Naive thymus-derived CD4-positive, alpha-beta T cell (primary cell): ENCODE measurements at regions of chr19 and their contacts with region 1.

Region 1: DNA sequence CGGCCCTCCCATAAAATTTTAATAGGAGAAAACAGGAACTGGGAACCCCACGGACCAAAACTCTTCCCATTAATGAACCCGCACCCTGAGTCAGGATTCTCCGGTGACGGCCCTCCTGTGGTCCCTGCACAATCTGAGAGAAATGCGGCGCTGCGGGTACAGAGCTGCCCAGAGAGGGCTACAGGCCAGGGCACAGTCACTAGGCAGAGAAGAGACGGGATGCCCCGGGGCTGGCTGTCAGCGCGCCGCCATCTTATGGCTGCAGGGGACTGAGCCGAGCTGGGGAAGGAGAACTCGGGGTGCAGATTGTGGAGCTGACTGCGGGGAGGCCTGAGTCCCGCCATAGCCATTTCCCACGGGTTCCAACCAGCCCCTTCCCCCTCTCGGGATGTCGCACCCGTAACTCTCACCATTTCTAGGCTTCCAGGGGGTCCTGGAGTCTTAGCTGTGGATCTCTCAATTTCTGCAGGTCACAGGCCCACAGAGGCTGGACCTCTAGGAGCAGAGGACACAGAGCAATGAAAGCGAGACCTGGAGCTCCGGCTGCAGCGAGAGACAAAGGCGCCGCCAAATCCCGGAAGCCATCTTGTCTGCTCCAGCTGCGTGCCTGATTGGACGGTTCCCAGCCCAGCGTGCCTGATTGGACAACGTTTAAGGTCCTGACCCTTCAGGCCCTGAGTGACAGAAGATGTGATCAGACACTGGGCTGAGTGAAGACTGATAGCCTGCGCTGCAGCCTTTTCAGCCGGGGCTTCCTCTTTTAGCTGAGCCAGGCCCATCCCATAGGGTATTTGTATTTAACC is at the start of gene ZNF675:
- DNase-seq: peak; percentile 68 to 90 (median 87)
- ATAC-seq: peak; percentile 95
- H3K4me3 ChIP-seq: peak within 1 kb of the TSS; percentile 94
- H3K4me3 Mint-ChIP-seq: peak within 1 kb of the TSS; percentile 96 to 99 (median 98)
- H3K27ac ChIP-seq: peak within 1 kb of the TSS; percentile 95
- H3K27ac Mint-ChIP-seq: peak within 1 kb of the TSS; percentile 96 to 99 (median 98)
- H3K4me1 ChIP-seq: peaks cover 9 to 30% of the 10 kb centered on the region in 2 donors
- H3K4me1 Mint-ChIP-seq: peaks cover 14 to 59% (median 50%) of the 10 kb centered on the region in 7 donors
- H3K27me3 ChIP-seq: no peaks in the 10 kb centered on the region
- H3K27me3 Mint-ChIP-seq: no peaks in the 10 kb centered on the region
- total RNA-seq, gene ZNF675: 17.5 to 39.6 (median 24.0) TPM

Region 2: DNA sequence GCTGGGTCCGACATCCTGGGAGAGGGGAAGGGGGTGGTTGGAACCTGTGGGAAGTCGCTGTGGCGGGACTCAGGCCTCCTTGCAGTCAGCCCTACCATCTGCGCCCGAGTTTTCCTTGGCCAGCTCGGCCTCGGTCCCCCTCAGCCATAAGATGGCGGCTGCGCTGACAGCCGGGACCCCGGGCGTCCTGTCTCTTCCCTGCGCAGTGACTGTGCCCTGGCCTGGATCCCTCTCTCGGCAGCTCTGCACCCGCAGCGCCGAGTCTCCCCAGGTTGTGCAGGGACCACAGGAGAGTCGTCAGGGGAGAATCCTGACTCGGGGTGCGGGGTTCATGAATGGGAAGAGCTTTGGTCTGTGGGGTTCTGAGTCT is 1634.2 kb before region 1 on chr19:
- CTCF ChIA-PET with region 1: no interaction called
- POLR2A ChIA-PET with region 1: no interaction called
- intact Hi-C with region 1: loop called in 1 of 2 experiments (anchors 5 kb)
- DNase-seq: no peak
- ATAC-seq: peak; percentile 44
- H3K4me3 ChIP-seq: peak overlapping the region; percentile 76
- H3K4me3 Mint-ChIP-seq: peak overlapping the region; percentile 89 to 96 (median 94)
- H3K27ac ChIP-seq: peak overlapping the region; percentile 72
- H3K27ac Mint-ChIP-seq: peak overlapping the region; percentile 65 to 92 (median 88)
- H3K4me1 ChIP-seq: no peaks in the 10 kb centered on the region
- H3K4me1 Mint-ChIP-seq: peaks cover 0 to 14% (median 0%) of the 10 kb centered on the region in 7 donors
- H3K27me3 ChIP-seq: no peaks in the 10 kb centered on the region
- H3K27me3 Mint-ChIP-seq: no peaks in the 10 kb centered on the region

Region 3: DNA sequence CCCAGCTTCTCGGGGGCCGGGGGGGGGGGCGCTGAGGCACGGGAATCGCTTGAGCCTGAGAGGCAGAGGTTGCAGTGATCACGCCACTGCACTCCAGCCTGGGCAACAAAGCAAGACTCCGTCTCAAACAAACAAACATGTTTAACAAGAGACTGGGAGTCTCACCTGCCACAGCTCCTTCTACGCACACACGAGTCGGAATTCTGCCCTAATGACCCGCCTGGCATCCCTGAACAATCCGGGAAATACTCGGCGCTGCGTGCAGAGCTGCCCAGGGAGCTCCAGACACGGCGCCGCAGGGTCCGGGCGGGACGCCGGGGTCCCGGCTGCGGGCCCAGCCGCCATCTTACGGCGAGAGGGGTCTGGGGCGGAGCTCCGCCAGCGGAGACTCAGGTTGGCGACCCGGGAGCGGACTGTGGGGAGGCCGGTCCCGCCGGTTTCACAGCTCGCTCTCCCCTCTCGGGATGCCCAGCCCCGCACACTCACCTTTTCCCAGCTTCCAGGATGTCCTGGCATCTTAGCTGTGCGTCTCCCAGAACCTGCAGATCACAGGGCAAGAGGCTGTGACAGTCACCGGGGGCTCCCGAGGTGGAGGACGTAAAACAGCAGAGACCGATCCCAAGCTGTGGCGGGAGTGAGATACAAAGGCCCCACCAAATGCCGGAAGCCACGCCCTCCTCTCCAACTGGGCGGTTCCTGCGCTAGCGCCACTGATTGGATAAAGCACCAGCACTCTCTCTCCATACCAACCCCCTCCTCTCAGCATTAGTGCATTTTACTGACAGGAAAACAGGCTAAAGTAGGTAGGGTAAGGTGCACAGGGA is 413.0 kb before region 1 on chr19:
- CTCF ChIA-PET with region 1: no interaction called
- POLR2A ChIA-PET with region 1: interaction called, 3 read pairs
- intact Hi-C with region 1: loop called (anchors 5 kb)
- DNase-seq: peak; percentile 76 to 93 (median 91)
- ATAC-seq: peak; percentile 100
- H3K4me3 ChIP-seq: peak overlapping the region; percentile 94
- H3K4me3 Mint-ChIP-seq: peak overlapping the region; percentile 94 to 99 (median 98)
- H3K27ac ChIP-seq: peak overlapping the region; percentile 95
- H3K27ac Mint-ChIP-seq: peak overlapping the region; percentile 92 to 98 (median 96)
- H3K4me1 ChIP-seq: peaks cover 0 to 7% of the 10 kb centered on the region in 2 donors
- H3K4me1 Mint-ChIP-seq: peaks cover 15 to 47% (median 30%) of the 10 kb centered on the region in 7 donors
- H3K27me3 ChIP-seq: no peaks in the 10 kb centered on the region
- H3K27me3 Mint-ChIP-seq: no peaks in the 10 kb centered on the region

Region 4: GRCh38 chr19:23758187-23759074 is 71.6 kb after region 1 on chr19 and contains the start of gene ZNF681:
- CTCF ChIA-PET with region 1: no interaction called
- POLR2A ChIA-PET with region 1: interaction called, 30 read pairs
- intact Hi-C with region 1: loop called (anchors 1 kb)
- DNase-seq: peak; percentile 56 to 93 (median 89)
- ATAC-seq: peak; percentile 93
- H3K4me3 ChIP-seq: peak within 1 kb of the TSS; percentile 95
- H3K4me3 Mint-ChIP-seq: peak within 1 kb of the TSS; percentile 87 to 96 (median 92)
- H3K27ac ChIP-seq: peak within 1 kb of the TSS; percentile 91
- H3K27ac Mint-ChIP-seq: peak within 1 kb of the TSS; percentile 89 to 97 (median 94)
- H3K4me1 ChIP-seq: peaks cover 0 to under 1% of the 10 kb centered on the region in 2 donors
- H3K4me1 Mint-ChIP-seq: peaks cover 12 to 48% (median 29%) of the 10 kb centered on the region in 7 donors
- H3K27me3 ChIP-seq: no peaks in the 10 kb centered on the region
- H3K27me3 Mint-ChIP-seq: no peaks in the 10 kb centered on the region
- total RNA-seq, gene ZNF681: 1.8 to 12.9 (median 4.4) TPM

Region 5: DNA sequence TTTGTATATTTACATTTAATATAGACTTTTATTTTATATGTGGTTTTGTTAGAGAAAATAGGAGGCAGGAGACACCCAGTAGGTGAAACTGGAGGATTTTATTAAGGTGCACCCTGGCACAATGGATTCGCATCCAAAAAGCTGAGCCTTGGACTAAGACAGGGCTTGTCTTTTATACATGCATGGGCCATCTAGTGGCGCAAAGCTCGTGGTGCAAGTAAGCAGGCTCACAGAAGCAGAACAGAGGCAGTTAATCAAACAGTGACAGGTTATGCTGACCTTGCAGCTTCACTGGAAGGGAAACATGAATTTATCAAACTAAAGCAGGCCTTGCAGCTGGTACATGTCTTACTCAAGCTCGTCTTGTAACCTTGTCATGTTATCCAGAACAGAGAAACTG is 130.7 kb after region 1 on chr19:
- CTCF ChIA-PET with region 1: interaction called, 4 read pairs
- POLR2A ChIA-PET with region 1: interaction called, 5 read pairs
- intact Hi-C with region 1: loop called in 1 of 2 experiments (anchors 2 kb)
- DNase-seq: peak in 6 of 9 donors; percentile 13 to 39 (median 26)
- ATAC-seq: peak; percentile 63
- H3K4me3 ChIP-seq: no peak overlapping the region
- H3K4me3 Mint-ChIP-seq: no peak overlapping the region
- H3K27ac ChIP-seq: no peak overlapping the region
- H3K27ac Mint-ChIP-seq: peak overlapping the region in 1 of 9 donors; percentile 4
- H3K4me1 ChIP-seq: no peaks in the 10 kb centered on the region
- H3K4me1 Mint-ChIP-seq: peaks cover 0 to 3% (median 0%) of the 10 kb centered on the region in 7 donors
- H3K27me3 ChIP-seq: no peaks in the 10 kb centered on the region
- H3K27me3 Mint-ChIP-seq: no peaks in the 10 kb centered on the region

Region 6: GRCh38 chr19:24033301-24033962 is 346.6 kb after region 1 on chr19:
- CTCF ChIA-PET with region 1: no interaction called
- POLR2A ChIA-PET with region 1: interaction called, 17 read pairs
- intact Hi-C with region 1: loop called (anchors 1 to 10 kb)
- DNase-seq: peak; percentile 50 to 89 (median 84)
- ATAC-seq: peak; percentile 99
- H3K4me3 ChIP-seq: peak overlapping the region; percentile 100
- H3K4me3 Mint-ChIP-seq: peak overlapping the region; percentile 99 to 100 (median 100)
- H3K27ac ChIP-seq: peak overlapping the region; percentile 90
- H3K27ac Mint-ChIP-seq: peak overlapping the region; percentile 96 to 100 (median 98)
- H3K4me1 ChIP-seq: peaks cover 11 to 24% of the 10 kb centered on the region in 2 donors
- H3K4me1 Mint-ChIP-seq: peaks cover 18 to 63% (median 56%) of the 10 kb centered on the region in 7 donors
- H3K27me3 ChIP-seq: no peaks in the 10 kb centered on the region
- H3K27me3 Mint-ChIP-seq: no peaks in the 10 kb centered on the region